ENCODE measurements at regions of chr1 and their contacts with region 1.

Region 1: GRCh38 chr1:159132271-159132881 is 39.0 kb upstream of the CADM3 start:
- DNase-seq: peak; percentile 19
- H3K4me3 Mint-ChIP-seq: no peak overlapping the region
- H3K27ac Mint-ChIP-seq: no peak overlapping the region
- H3K4me1 Mint-ChIP-seq: no peaks in the 10 kb centered on the region
- H3K27me3 Mint-ChIP-seq: peaks cover 4% of the 10 kb centered on the region

Region 2: DNA sequence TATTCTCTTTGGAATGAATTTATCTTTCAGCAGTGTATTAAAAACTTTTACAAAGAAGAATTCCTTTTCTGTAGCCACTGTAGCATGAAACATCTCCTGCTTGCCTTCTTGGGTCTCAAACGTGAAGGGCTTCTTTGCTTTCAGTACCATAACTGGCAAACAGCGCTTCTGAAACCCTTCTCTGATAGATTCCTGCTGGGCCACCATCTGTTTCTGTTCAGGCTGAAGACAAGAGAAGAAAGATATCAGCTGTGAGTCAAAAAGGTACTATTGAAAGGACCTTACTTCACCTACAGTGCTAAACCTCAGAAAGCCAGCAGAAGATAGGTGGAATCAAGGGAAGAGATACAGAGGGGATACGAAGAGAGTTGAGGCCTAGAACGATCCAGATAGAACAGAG is 66.3 kb before region 1 on chr1:
- intact Hi-C with region 1: no loop called
- DNase-seq: no peak
- H3K4me3 Mint-ChIP-seq: no peak overlapping the region
- H3K27ac Mint-ChIP-seq: no peak overlapping the region
- H3K4me1 Mint-ChIP-seq: peaks cover 29% of the 10 kb centered on the region
- H3K27me3 Mint-ChIP-seq: no peaks in the 10 kb centered on the region

Region 3: DNA sequence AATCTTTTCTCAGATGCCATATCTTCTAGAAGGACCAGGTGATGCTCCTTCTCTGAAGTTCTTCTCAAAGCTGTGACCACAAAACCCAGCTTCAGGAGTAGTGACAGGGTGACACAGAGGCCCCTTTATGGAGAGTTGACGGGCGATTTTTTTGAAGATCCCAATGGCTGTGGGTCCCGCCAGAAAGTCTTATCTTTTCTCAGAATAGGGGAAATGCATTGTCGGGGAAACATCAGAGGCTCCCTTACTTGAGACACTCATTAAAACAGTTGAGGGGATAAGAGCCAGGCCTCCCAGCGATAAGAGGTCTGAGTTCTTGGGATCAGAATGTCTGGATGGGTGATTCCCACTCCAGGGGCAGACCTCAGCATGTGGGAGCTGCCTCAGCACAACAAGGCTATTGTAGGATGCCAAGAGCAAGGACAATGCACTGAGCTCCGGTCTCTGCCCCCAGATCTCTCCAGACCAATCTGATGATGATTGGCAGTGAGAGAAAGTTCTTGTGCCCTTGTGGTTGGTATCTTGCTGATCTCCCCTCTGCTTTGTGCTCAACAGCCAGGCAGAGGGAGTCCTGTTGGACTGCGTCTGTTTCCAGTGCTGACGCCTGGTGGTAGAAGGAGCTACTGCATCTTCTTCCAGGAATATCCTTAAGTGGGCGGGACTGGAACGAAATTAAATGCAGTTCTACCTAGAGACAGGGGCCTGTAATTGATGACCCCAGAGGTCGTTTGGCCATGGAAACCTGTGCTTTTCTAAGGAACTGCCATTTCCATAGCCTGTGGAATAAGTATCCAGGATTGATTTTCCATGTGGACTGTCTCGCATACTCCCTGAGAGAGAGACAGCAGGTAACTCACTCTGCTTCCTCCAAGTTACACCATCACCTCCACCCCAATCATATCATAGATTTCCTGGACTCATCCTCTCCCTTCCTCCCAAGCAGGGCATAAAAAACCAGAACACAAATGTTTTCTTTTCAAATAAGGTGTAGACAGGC is 65.5 kb after region 1 on chr1:
- intact Hi-C with region 1: loop called (anchors 1 kb)
- DNase-seq: peak; percentile 16
- H3K4me3 Mint-ChIP-seq: no peak overlapping the region
- H3K27ac Mint-ChIP-seq: no peak overlapping the region
- H3K4me1 Mint-ChIP-seq: no peaks in the 10 kb centered on the region
- H3K27me3 Mint-ChIP-seq: peaks cover 15% of the 10 kb centered on the region

Region 4: DNA sequence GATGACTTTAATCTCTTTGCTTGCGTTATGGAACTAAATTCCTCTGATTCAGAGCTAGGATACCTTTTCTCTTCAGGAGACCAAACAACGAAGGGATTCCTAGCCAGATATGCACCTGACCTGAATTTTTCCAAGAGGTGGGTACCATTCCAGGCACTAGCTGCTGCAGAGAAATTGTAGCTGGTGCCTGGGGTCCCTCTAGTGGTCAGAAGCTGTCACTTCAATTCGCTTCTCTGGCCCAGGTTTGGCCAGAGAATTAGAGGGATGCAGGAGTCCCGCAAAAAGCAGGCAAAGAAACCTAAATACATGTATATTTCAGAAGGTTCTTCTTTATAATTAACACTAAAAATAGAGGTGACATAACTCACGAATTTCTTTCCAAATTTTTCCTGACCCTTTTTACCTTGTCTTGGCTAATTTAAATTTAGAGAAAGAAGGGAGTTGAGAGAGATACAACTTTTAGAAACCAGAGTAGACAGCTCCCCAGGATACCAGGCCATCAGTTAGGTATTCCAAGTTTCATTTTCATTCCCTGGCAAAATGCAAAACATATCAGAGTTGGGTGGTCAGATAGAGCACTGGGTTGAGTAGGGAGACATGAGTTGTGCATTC is 81.9 kb after region 1 on chr1:
- intact Hi-C with region 1: loop called (anchors 1 kb)
- DNase-seq: peak; percentile 10
- H3K4me3 Mint-ChIP-seq: no peak overlapping the region
- H3K27ac Mint-ChIP-seq: no peak overlapping the region
- H3K4me1 Mint-ChIP-seq: no peaks in the 10 kb centered on the region
- H3K27me3 Mint-ChIP-seq: peaks cover 12% of the 10 kb centered on the region